MCF 10A (cell line): ENCODE measurements at regions of chr10 and their contacts with region 1.

Region 1: GRCh38 chr10:119725828-119726675 is at the start of gene INPP5F:
- DNase-seq: peak; percentile 98
- H3K4me3 Mint-ChIP-seq: peak within 1 kb of the TSS; percentile 82
- H3K27ac Mint-ChIP-seq: peak within 1 kb of the TSS; percentile 76
- H3K4me1 Mint-ChIP-seq: peaks cover 45% of the 10 kb centered on the region
- H3K27me3 Mint-ChIP-seq: no peaks in the 10 kb centered on the region
- CTCF ChIP-seq: peak; percentile 5
- total RNA-seq, gene INPP5F: 10.3 and 14.9 TPM in 2 replicates

Region 2: GRCh38 chr10:119608316-119609155 is 117.5 kb before region 1 on chr10:
- CTCF ChIA-PET with region 1: interaction called, 5 read pairs
- POLR2A ChIA-PET with region 1: interaction called, 4 read pairs
- intact Hi-C with region 1: loop called (anchors 1 kb)
- DNase-seq: peak; percentile 66
- H3K4me3 Mint-ChIP-seq: no peak overlapping the region
- H3K27ac Mint-ChIP-seq: no peak overlapping the region
- H3K4me1 Mint-ChIP-seq: peaks cover 5% of the 10 kb centered on the region
- H3K27me3 Mint-ChIP-seq: no peaks in the 10 kb centered on the region
- CTCF ChIP-seq: peak; percentile 58

Region 3: GRCh38 chr10:119667562-119668328 is 58.3 kb before region 1 on chr10:
- CTCF ChIA-PET with region 1: no interaction called
- POLR2A ChIA-PET with region 1: interaction called, 11 read pairs
- intact Hi-C with region 1: no loop called
- DNase-seq: peak; percentile 98
- H3K4me3 Mint-ChIP-seq: peak overlapping the region; percentile 59
- H3K27ac Mint-ChIP-seq: peak overlapping the region; percentile 93
- H3K4me1 Mint-ChIP-seq: peaks cover 54% of the 10 kb centered on the region
- H3K27me3 Mint-ChIP-seq: no peaks in the 10 kb centered on the region
- CTCF ChIP-seq: no peak

Region 4: DNA sequence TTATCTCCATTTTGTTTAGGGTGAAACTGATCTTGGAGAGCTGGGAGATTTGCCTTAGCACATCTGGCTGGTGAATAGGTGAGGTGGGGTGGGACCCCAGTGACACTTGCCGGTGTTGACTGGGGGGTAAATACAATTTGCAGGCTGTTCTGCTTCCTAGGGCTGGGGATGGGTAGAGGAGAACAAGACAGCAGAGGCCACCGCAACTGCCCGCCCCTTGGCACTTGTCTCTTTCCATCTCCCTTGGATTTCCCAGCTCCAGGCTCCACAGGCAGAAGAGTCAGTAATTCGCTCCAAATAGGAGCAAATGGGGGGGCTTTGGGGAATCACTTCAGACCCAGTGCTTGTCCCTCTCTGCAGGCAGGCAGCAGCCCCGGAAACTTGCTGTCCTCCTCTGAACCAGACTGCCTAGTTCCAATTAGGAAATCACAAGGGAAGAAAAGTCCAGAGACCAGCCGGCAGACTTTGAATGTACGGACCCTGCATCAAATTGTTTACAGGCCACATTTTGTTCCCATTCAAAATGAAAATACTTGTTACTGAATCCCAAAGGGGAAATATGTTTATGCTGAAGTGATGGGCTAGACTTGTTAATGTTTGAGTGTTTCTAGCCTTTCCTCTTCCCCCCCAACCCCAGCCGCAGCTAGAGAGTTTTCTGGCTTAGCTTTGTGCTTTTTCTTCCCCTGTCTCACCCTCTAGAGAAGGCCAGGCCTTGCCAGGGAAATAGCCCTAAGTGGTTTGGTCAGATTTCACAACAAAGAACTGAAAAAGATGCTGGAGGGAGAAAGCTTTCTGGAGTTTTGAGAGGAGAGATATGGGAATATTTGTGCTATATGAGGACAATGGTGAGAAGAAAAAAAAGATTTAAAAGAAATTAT is 10.2 kb before region 1 on chr10:
- CTCF ChIA-PET with region 1: interaction called, 4 read pairs
- POLR2A ChIA-PET with region 1: interaction called, 14 read pairs
- intact Hi-C with region 1: no loop called
- DNase-seq: no peak
- H3K4me3 Mint-ChIP-seq: no peak overlapping the region
- H3K27ac Mint-ChIP-seq: no peak overlapping the region
- H3K4me1 Mint-ChIP-seq: no peaks in the 10 kb centered on the region
- H3K27me3 Mint-ChIP-seq: no peaks in the 10 kb centered on the region
- CTCF ChIP-seq: no peak

Region 5: DNA sequence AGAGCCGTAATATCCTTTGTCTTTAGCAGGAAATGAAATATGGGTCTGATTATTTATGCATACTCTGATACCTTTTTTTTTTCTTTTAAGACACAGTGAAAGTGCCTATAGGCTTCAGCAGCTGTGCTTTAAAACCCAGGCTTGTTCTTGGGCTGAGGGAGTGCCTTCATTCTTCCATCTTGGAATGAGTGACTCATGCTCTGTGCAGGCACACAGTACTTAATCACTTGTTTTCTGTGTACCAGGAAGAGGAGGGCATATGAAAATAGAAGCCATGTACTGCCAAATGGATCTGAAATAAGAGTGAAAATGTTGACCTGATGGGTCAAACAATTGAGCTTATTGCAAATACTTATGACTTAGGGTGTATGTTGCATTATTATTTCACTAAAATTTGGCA is 11.8 kb after region 1 on chr10:
- CTCF ChIA-PET with region 1: interaction called, 7 read pairs
- POLR2A ChIA-PET with region 1: interaction called, 131 read pairs
- intact Hi-C with region 1: no loop called
- DNase-seq: peak; percentile 81
- H3K4me3 Mint-ChIP-seq: peak overlapping the region; percentile 68
- H3K27ac Mint-ChIP-seq: peak overlapping the region; percentile 86
- H3K4me1 Mint-ChIP-seq: peaks cover 18% of the 10 kb centered on the region
- H3K27me3 Mint-ChIP-seq: no peaks in the 10 kb centered on the region
- CTCF ChIP-seq: no peak

Region 6: DNA sequence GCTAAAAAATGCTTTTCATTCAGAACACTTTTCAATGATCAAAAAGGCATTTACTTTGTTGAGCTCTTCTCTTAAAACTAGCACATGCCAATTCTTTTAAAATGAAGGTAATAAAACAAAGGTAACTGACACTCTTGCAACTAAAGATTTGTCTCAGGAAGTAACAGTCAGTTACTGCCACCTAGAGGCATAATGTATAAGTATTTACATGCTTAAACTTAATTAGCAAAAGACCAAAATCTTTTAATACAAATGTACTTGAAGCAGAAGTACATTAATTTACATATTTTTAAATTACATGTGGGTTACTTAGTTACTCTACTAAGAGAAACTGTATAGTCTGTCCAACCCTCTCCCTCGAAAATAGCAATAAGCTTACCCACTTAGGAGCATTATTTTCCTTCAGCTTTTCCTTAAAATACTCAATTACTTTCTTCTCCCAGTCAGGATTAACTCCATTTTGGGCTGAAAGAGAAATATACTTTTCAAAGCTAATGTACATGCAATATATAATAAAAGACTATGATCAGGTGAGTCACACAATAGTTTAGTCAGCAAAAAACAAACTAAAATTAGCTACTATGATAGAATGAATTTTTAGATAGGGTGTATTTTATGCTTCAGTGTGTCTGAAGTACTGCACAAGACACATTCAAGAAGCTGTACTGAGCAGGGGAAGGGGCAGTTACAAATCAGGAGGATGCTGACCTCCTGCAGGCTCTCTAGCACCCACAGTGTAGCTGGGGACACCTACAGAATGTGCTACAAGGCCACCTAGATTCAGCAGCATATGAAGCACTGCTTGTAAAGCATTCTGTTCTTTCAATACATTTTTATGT is 133.6 kb after region 1 on chr10:
- CTCF ChIA-PET with region 1: interaction called, 8 read pairs
- POLR2A ChIA-PET with region 1: interaction called, 10 read pairs
- intact Hi-C with region 1: no loop called
- DNase-seq: peak; percentile 63
- H3K4me3 Mint-ChIP-seq: no peak overlapping the region
- H3K27ac Mint-ChIP-seq: peak overlapping the region; percentile 35
- H3K4me1 Mint-ChIP-seq: peaks cover 23% of the 10 kb centered on the region
- H3K27me3 Mint-ChIP-seq: no peaks in the 10 kb centered on the region
- CTCF ChIP-seq: peak; percentile 38